Breast epithelium (tissue), 4 donors: ENCODE measurements at regions of chr3 and their contacts with region 1.

Region 1: GRCh38 chr3:195855471-195856386 is 44.0 kb upstream of the MUC4 start:
- DNase-seq: no peak
- H3K4me3 ChIP-seq: no peak overlapping the region
- H3K27ac ChIP-seq: no peak overlapping the region
- H3K4me1 ChIP-seq: no peaks in the 10 kb centered on the region
- H3K27me3 ChIP-seq: no peaks in the 10 kb centered on the region
- CTCF ChIP-seq: no peak
- POLR2A ChIP-seq: no peak

Region 2: DNA sequence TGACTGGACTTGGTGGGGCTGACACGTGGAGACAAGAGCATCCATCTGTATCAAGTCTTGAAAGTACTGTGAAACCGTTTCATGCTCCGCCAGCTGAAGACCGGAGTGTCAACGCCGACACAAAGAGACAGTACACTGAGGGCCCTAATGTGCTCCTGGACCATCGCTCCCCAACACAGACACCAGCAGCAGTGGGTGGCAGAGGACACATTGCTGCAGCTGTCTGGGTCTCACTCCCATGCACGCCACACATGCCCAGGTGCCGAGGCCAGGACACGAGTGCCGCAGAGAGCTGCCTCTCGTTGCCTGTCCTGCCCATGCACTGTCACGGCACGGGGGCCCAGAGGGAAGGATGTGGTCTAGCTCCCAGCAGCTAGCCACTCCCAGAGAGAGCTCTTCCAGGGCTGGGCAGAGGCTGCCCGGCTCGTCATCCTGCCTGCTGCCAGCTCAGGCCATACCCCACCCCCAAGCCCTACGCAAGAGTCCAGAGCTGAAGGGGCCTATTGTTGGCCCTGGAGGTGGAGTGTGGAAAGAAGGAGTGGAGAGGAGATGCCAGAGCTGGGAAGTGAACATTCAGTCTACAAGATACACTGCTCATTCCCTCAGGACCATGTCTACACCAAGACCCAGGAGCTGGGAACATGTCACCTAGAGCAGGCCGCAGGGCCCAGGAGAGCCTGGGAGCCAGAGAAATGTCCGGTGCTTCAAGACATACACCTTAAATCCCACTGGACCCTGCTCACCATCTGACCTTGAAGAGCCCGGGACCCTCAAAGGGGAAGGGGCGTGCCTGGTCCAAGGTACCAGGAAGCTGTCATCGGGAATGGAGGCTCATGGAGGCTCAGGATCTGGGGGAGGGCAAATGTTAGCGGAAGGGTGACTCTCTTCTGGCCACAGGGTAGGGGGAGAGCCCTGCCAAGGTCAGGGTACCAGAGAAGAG is 45.0 kb after region 1 on chr3:
- intact Hi-C with region 1: no loop called
- DNase-seq: peak in 1 of 2 donors; percentile 92
- H3K4me3 ChIP-seq: peak overlapping the region in 2 of 3 donors; percentile 1 to 36
- H3K27ac ChIP-seq: peak overlapping the region; percentile 89 to 95
- H3K4me1 ChIP-seq: peaks cover 13 to 15% of the 10 kb centered on the region in 2 donors
- H3K27me3 ChIP-seq: no peaks in the 10 kb centered on the region
- CTCF ChIP-seq: no peak
- POLR2A ChIP-seq: no peak

Region 3: DNA sequence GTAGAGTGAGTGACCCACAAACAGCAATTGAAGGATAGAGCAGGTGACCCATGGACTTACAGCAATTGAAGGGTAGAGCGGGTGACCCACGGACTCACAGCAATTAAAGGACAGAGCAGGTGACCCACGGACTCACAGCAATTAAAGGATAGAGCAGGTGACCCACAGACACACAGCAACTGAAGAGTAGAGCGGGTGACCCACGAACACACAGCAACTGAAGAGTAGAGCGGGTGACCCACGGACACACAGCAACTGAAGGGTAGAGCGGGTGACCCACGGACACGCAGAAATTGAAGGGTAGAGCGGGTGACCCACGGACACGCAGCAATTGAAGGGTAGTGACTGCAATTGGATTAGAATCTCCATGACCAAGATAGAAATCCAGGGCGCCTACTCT is 62.4 kb after region 1 on chr3:
- intact Hi-C with region 1: loop called (anchors 2 kb)
- DNase-seq: peak in 1 of 2 donors; percentile 28
- H3K4me3 ChIP-seq: no peak overlapping the region
- H3K27ac ChIP-seq: no peak overlapping the region
- H3K4me1 ChIP-seq: peaks cover 0 to 9% of the 10 kb centered on the region in 2 donors
- H3K27me3 ChIP-seq: no peaks in the 10 kb centered on the region
- CTCF ChIP-seq: no peak
- POLR2A ChIP-seq: no peak